B cell (primary cell): ENCODE measurements at regions of chr2 and their contacts with region 1.

Region 1: DNA sequence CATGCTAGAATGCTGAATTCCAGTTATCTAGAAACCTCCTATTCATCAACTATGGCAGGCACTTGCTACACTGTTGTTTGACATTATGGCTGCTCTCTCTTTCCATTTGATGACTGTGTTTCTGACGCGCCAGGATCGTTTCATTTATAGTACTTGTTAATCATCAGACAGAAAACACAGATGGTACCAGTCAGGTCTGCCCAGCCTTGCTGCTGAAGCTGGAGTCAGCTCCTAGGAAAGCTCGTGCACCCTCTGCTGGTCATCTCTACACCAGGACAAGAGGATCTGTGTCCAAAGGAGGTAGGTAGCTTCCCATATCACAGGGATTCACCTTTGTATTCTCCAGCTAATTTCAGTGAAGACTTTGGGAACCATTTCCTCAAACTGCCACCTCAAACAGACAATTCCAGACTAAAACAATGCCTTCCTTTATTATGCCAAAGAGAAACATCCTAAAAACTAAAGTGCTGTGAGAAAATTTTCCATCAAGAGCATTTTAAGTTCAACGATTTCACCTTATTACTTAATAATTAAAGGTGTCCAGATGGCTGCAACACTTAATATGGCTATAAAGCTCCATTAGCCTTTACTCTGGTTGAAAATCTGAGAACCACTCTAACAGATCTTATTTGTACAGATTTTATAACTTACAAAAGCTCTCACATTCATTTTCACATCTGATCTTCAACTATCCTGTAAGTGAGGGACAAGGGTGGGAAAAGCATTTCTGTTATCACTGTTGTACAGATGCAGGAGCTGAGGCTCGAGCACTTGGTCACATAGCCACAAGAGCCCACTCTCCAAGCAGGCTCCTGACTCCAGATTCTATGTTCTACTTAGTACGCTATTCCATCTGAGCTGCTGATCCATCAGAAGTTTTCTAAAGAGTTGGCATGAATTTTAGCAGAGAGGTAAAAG is 17.5 kb downstream of the METTL8 start:
- DNase-seq: peak; percentile 89
- ATAC-seq: peak; percentile 97
- H3K4me3 ChIP-seq: no peak overlapping the region
- H3K4me3 Mint-ChIP-seq: peak overlapping the region; percentile 21
- H3K27ac ChIP-seq: peak overlapping the region; percentile 47 to 71
- H3K27ac Mint-ChIP-seq: peak overlapping the region; percentile 77
- H3K4me1 ChIP-seq: peaks cover 15% of the 10 kb centered on the region in 2 donors
- H3K4me1 Mint-ChIP-seq: peaks cover 16% of the 10 kb centered on the region
- H3K27me3 ChIP-seq: no peaks in the 10 kb centered on the region
- H3K27me3 Mint-ChIP-seq: no peaks in the 10 kb centered on the region
- CTCF ChIP-seq: peak; percentile 83

Region 2: GRCh38 chr2:170928824-170929685 is 487.2 kb before region 1 on chr2 and contains the start of gene GORASP2:
- CTCF ChIA-PET with region 1: interaction called, 11 read pairs
- POLR2A ChIA-PET with region 1: no interaction called
- intact Hi-C with region 1: no loop called
- DNase-seq: peak; percentile 99
- ATAC-seq: peak; percentile 91
- H3K4me3 ChIP-seq: peak within 1 kb of the TSS; percentile 73 to 95 (median 89)
- H3K4me3 Mint-ChIP-seq: peak within 1 kb of the TSS; percentile 92
- H3K27ac ChIP-seq: peak within 1 kb of the TSS; percentile 75 to 90
- H3K27ac Mint-ChIP-seq: peak within 1 kb of the TSS; percentile 96
- H3K4me1 ChIP-seq: peaks cover 20 to 22% of the 10 kb centered on the region in 2 donors
- H3K4me1 Mint-ChIP-seq: peaks cover 34% of the 10 kb centered on the region
- H3K27me3 ChIP-seq: no peaks in the 10 kb centered on the region
- H3K27me3 Mint-ChIP-seq: no peaks in the 10 kb centered on the region
- CTCF ChIP-seq: peak; percentile 99
- total RNA-seq, gene GORASP2: 48.8 and 50.5 TPM in 2 replicates

Region 3: GRCh38 chr2:171049691-171050090 is 366.6 kb before region 1 on chr2:
- CTCF ChIA-PET with region 1: interaction called, 8 read pairs
- POLR2A ChIA-PET with region 1: no interaction called
- intact Hi-C with region 1: loop called (anchors 5 kb)
- DNase-seq: no peak
- ATAC-seq: no peak
- H3K4me3 ChIP-seq: no peak overlapping the region
- H3K4me3 Mint-ChIP-seq: no peak overlapping the region
- H3K27ac ChIP-seq: no peak overlapping the region
- H3K27ac Mint-ChIP-seq: no peak overlapping the region
- H3K4me1 ChIP-seq: no peaks in the 10 kb centered on the region
- H3K4me1 Mint-ChIP-seq: no peaks in the 10 kb centered on the region
- H3K27me3 ChIP-seq: no peaks in the 10 kb centered on the region
- H3K27me3 Mint-ChIP-seq: no peaks in the 10 kb centered on the region
- CTCF ChIP-seq: no peak

Region 4: GRCh38 chr2:171260471-171261424 is 155.5 kb before region 1 on chr2:
- CTCF ChIA-PET with region 1: interaction called, 22 read pairs
- POLR2A ChIA-PET with region 1: no interaction called
- intact Hi-C with region 1: loop called (anchors 5 kb)
- DNase-seq: peak; percentile 33
- ATAC-seq: peak; percentile 33
- H3K4me3 ChIP-seq: no peak overlapping the region
- H3K4me3 Mint-ChIP-seq: peak overlapping the region; percentile 35
- H3K27ac ChIP-seq: peak overlapping the region in 1 of 2 donors; percentile 37
- H3K27ac Mint-ChIP-seq: peak overlapping the region; percentile 81
- H3K4me1 ChIP-seq: peaks cover 13 to 15% of the 10 kb centered on the region in 2 donors
- H3K4me1 Mint-ChIP-seq: peaks cover 19% of the 10 kb centered on the region
- H3K27me3 ChIP-seq: no peaks in the 10 kb centered on the region
- H3K27me3 Mint-ChIP-seq: no peaks in the 10 kb centered on the region
- CTCF ChIP-seq: no peak

Region 5: GRCh38 chr2:171325886-171326585 is 90.2 kb before region 1 on chr2:
- CTCF ChIA-PET with region 1: interaction called, 23 read pairs
- POLR2A ChIA-PET with region 1: interaction called, 4 read pairs
- intact Hi-C with region 1: loop called (anchors 1 kb)
- DNase-seq: peak; percentile 75
- ATAC-seq: peak; percentile 52
- H3K4me3 ChIP-seq: peak overlapping the region; percentile 24 to 54 (median 50)
- H3K4me3 Mint-ChIP-seq: peak overlapping the region; percentile 89
- H3K27ac ChIP-seq: peak overlapping the region; percentile 89 to 91
- H3K27ac Mint-ChIP-seq: peak overlapping the region; percentile 91
- H3K4me1 ChIP-seq: peaks cover 67 to 70% of the 10 kb centered on the region in 2 donors
- H3K4me1 Mint-ChIP-seq: peaks cover 76% of the 10 kb centered on the region
- H3K27me3 ChIP-seq: no peaks in the 10 kb centered on the region
- H3K27me3 Mint-ChIP-seq: no peaks in the 10 kb centered on the region
- CTCF ChIP-seq: no peak

Region 6: DNA sequence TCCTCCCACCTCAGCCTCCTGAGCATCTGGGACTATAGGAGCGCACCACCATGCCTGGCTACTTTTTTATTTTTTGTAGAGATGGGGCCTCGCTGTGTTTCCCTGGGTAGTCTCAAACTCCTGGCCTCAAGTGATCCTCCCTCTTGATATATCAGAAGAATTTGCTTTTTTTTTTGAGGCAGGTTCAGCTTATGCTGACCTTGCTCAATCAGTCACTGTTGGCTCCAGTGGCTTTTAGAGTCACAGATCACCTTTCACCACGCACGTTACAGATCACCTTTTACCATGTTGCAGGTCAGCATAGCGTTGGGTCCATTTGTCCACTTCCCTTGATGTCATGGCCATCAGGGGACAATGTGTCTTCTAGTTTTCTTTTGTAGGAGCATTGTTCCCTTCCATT is 53.9 kb after region 1 on chr2:
- CTCF ChIA-PET with region 1: no interaction called
- POLR2A ChIA-PET with region 1: no interaction called
- intact Hi-C with region 1: no loop called
- DNase-seq: no peak
- ATAC-seq: no peak
- H3K4me3 ChIP-seq: no peak overlapping the region
- H3K4me3 Mint-ChIP-seq: no peak overlapping the region
- H3K27ac ChIP-seq: no peak overlapping the region
- H3K27ac Mint-ChIP-seq: no peak overlapping the region
- H3K4me1 ChIP-seq: no peaks in the 10 kb centered on the region
- H3K4me1 Mint-ChIP-seq: no peaks in the 10 kb centered on the region
- H3K27me3 ChIP-seq: no peaks in the 10 kb centered on the region
- H3K27me3 Mint-ChIP-seq: no peaks in the 10 kb centered on the region
- CTCF ChIP-seq: no peak

Region 7: GRCh38 chr2:171482877-171483276 is 66.6 kb after region 1 on chr2:
- CTCF ChIA-PET with region 1: no interaction called
- POLR2A ChIA-PET with region 1: no interaction called
- intact Hi-C with region 1: no loop called
- DNase-seq: no peak
- ATAC-seq: no peak
- H3K4me3 ChIP-seq: no peak overlapping the region
- H3K4me3 Mint-ChIP-seq: no peak overlapping the region
- H3K27ac ChIP-seq: no peak overlapping the region
- H3K27ac Mint-ChIP-seq: no peak overlapping the region
- H3K4me1 ChIP-seq: no peaks in the 10 kb centered on the region
- H3K4me1 Mint-ChIP-seq: no peaks in the 10 kb centered on the region
- H3K27me3 ChIP-seq: no peaks in the 10 kb centered on the region
- H3K27me3 Mint-ChIP-seq: no peaks in the 10 kb centered on the region
- CTCF ChIP-seq: no peak

Region 8: GRCh38 chr2:171541202-171541887 is 125.1 kb after region 1 on chr2:
- CTCF ChIA-PET with region 1: no interaction called
- POLR2A ChIA-PET with region 1: no interaction called
- intact Hi-C with region 1: no loop called
- DNase-seq: no peak
- ATAC-seq: no peak
- H3K4me3 ChIP-seq: no peak overlapping the region
- H3K4me3 Mint-ChIP-seq: no peak overlapping the region
- H3K27ac ChIP-seq: no peak overlapping the region
- H3K27ac Mint-ChIP-seq: no peak overlapping the region
- H3K4me1 ChIP-seq: no peaks in the 10 kb centered on the region
- H3K4me1 Mint-ChIP-seq: no peaks in the 10 kb centered on the region
- H3K27me3 ChIP-seq: peaks cover 0 to 3% (median 1%) of the 10 kb centered on the region in 4 experiments
- H3K27me3 Mint-ChIP-seq: peaks cover 25% of the 10 kb centered on the region
- CTCF ChIP-seq: peak; percentile 14

Region 9: DNA sequence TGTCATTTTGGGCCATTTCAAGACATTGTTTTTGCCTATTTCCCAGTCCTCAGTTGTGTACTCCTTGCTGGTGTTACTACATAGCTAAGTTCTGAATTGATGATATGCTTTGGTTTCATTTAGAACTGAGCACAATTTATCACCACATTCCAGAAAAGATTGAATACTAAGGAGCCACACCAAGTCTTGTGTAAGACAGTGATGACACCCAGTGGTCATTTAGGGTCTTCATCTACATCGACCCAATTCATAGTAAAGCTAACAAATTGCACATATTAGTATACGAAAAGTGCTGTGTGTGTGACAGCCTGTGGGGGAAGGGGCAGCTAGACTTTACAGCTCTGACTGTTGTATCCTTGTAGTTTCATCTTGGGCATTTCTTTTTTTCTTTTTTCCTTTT is 697.3 kb after region 1 on chr2:
- CTCF ChIA-PET with region 1: no interaction called
- POLR2A ChIA-PET with region 1: no interaction called
- intact Hi-C with region 1: no loop called
- DNase-seq: peak; percentile 14
- ATAC-seq: no peak
- H3K4me3 ChIP-seq: no peak overlapping the region
- H3K4me3 Mint-ChIP-seq: no peak overlapping the region
- H3K27ac ChIP-seq: no peak overlapping the region
- H3K27ac Mint-ChIP-seq: no peak overlapping the region
- H3K4me1 ChIP-seq: peaks cover 3 to 5% of the 10 kb centered on the region in 2 donors
- H3K4me1 Mint-ChIP-seq: peaks cover 2% of the 10 kb centered on the region
- H3K27me3 ChIP-seq: peaks cover 0 to 30% (median 18%) of the 10 kb centered on the region in 4 experiments
- H3K27me3 Mint-ChIP-seq: peaks cover 41% of the 10 kb centered on the region
- CTCF ChIP-seq: no peak